Caco-2 (cell line): ENCODE measurements at regions of chr4 and their contacts with region 1.

Region 1: GRCh38 chr4:19005211-19005610 is 983.7 kb upstream of the LCORL start:
- DNase-seq: peak; percentile 64 to 66
- H3K4me3 ChIP-seq: no peak overlapping the region
- H3K4me3 Mint-ChIP-seq: no peak overlapping the region
- H3K27ac Mint-ChIP-seq: peak overlapping the region; percentile 57
- H3K4me1 ChIP-seq: peaks cover 8% of the 10 kb centered on the region; the same call in 1 of the 2 replicates
- H3K4me1 Mint-ChIP-seq: peaks cover 9% of the 10 kb centered on the region
- H3K27me3 ChIP-seq: no peaks in the 10 kb centered on the region
- H3K27me3 Mint-ChIP-seq: no peaks in the 10 kb centered on the region
- CTCF ChIP-seq: no peak

Region 2: DNA sequence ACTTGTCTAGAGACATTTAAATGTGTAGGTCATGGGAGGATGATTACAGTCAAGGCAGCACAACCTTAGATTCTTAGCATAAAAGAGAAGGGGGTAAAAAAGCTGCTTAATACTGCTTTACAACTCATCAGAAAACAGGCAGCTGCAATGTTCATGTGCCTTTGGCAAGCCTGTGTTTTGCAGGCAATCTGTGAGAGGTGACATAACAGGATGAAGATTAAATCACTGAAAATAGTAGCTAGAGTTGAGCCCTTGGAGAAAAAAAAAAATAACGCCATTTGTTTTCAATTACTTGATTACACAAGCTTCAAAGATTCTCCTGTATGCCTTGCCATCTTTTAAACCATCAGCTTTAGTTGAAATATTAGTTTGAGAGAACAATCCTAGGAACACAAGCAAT is 136.0 kb before region 1 on chr4:
- CTCF ChIA-PET with region 1: no interaction called
- POLR2A ChIA-PET with region 1: no interaction called
- intact Hi-C with region 1: loop called (anchors 1 kb)
- DNase-seq: no peak
- H3K4me3 ChIP-seq: no peak overlapping the region
- H3K4me3 Mint-ChIP-seq: no peak overlapping the region
- H3K27ac Mint-ChIP-seq: no peak overlapping the region
- H3K4me1 ChIP-seq: peaks cover 25% of the 10 kb centered on the region
- H3K4me1 Mint-ChIP-seq: peaks cover 14% of the 10 kb centered on the region
- H3K27me3 ChIP-seq: no peaks in the 10 kb centered on the region
- H3K27me3 Mint-ChIP-seq: no peaks in the 10 kb centered on the region
- CTCF ChIP-seq: no peak

Region 3: DNA sequence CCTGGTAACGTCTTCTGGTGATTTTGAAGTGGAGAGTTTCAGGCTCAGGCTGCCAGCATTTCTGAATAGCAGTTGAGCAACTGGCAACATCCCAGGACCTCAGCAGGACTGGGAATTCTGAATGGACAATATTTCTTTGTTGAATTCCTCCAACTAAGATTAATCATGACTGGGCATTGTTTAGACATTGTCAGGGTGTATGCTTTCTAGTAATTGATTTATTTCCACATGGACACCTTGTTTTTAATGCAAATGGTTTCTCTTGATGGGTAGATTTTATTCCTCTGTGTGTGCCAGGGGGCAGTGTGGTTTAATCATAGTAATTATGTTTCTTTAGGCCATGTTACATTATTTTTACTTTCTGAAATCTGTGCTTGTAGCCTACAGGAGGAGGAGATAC is 21.1 kb after region 1 on chr4:
- CTCF ChIA-PET with region 1: no interaction called
- POLR2A ChIA-PET with region 1: no interaction called
- intact Hi-C with region 1: loop called (anchors 1 kb)
- DNase-seq: no peak
- H3K4me3 ChIP-seq: no peak overlapping the region
- H3K4me3 Mint-ChIP-seq: no peak overlapping the region
- H3K27ac Mint-ChIP-seq: no peak overlapping the region
- H3K4me1 ChIP-seq: peaks cover 26% of the 10 kb centered on the region
- H3K4me1 Mint-ChIP-seq: peaks cover 15% of the 10 kb centered on the region
- H3K27me3 ChIP-seq: no peaks in the 10 kb centered on the region
- H3K27me3 Mint-ChIP-seq: no peaks in the 10 kb centered on the region
- CTCF ChIP-seq: no peak

Region 4: DNA sequence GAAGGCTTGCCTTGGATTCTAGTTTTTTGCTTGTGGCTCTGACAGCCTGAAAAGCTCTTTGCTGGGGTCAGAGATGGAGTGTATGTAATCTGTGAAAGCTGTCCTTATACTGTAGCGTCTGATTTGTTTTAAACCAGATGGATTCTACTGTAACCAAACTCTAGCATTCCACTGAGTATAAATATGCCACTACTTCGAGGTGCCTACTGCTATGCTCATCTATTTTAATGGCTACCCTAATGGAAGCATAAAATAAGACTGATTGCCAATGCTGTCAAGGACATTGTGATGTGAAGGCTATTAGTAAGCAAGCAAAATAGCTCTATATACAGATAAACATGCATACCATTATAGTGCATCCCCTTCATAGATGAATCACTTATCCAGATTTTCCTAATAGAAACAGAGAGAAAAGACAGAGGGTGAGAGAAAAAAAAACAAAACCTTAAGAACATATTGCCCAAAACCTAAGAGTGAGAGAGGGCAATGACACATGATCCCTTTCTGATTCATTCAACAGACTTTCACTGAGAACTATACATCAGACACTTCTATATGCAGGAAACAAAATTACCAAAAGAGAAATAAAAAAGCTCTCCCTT is 42.2 kb after region 1 on chr4:
- CTCF ChIA-PET with region 1: no interaction called
- POLR2A ChIA-PET with region 1: no interaction called
- intact Hi-C with region 1: loop called (anchors 5 kb)
- DNase-seq: no peak
- H3K4me3 ChIP-seq: no peak overlapping the region
- H3K4me3 Mint-ChIP-seq: no peak overlapping the region
- H3K27ac Mint-ChIP-seq: no peak overlapping the region
- H3K4me1 ChIP-seq: peaks cover 11% of the 10 kb centered on the region; the same call in 1 of the 2 replicates
- H3K4me1 Mint-ChIP-seq: no peaks in the 10 kb centered on the region
- H3K27me3 ChIP-seq: no peaks in the 10 kb centered on the region
- H3K27me3 Mint-ChIP-seq: no peaks in the 10 kb centered on the region
- CTCF ChIP-seq: no peak